Endothelial cell of umbilical vein (primary cell): ENCODE measurements at regions of chr10 and their contacts with region 1.

Region 1: GRCh38 chr10:119199231-119199992 is 8.0 kb upstream of the GRK5 start:
- DNase-seq: peak; percentile 82
- H3K4me3 ChIP-seq: no peak overlapping the region
- H3K27ac ChIP-seq: no peak overlapping the region
- H3K4me1 ChIP-seq: peaks cover 31% of the 10 kb centered on the region
- H3K27me3 ChIP-seq: no peaks in the 10 kb centered on the region
- CTCF ChIP-seq: peak; percentile 78 to 81
- POLR2A ChIP-seq: no peak

Region 2: GRCh38 chr10:119139464-119140067 is 59.8 kb before region 1 on chr10:
- CTCF ChIA-PET with region 1: interaction called, 8 read pairs
- POLR2A ChIA-PET with region 1: no interaction called
- dilution Hi-C with region 1: no loop called
- intact Hi-C with region 1: loop called (anchors 1 kb)
- DNase-seq: peak; percentile 37
- H3K4me3 ChIP-seq: no peak overlapping the region
- H3K27ac ChIP-seq: no peak overlapping the region
- H3K4me1 ChIP-seq: peaks cover 3% of the 10 kb centered on the region
- H3K27me3 ChIP-seq: no peaks in the 10 kb centered on the region
- CTCF ChIP-seq: peak; percentile 50 to 75
- POLR2A ChIP-seq: no peak

Region 3: GRCh38 chr10:119225083-119225658 is 25.8 kb after region 1 on chr10:
- CTCF ChIA-PET with region 1: no interaction called
- POLR2A ChIA-PET with region 1: no interaction called
- dilution Hi-C with region 1: no loop called
- intact Hi-C with region 1: no loop called
- DNase-seq: peak; percentile 58
- H3K4me3 ChIP-seq: no peak overlapping the region
- H3K27ac ChIP-seq: no peak overlapping the region
- H3K4me1 ChIP-seq: no peaks in the 10 kb centered on the region
- H3K27me3 ChIP-seq: no peaks in the 10 kb centered on the region
- CTCF ChIP-seq: no peak
- POLR2A ChIP-seq: no peak

Region 4: GRCh38 chr10:119246862-119247549 is 47.6 kb after region 1 on chr10:
- CTCF ChIA-PET with region 1: interaction called, 17 read pairs
- POLR2A ChIA-PET with region 1: no interaction called
- dilution Hi-C with region 1: no loop called
- intact Hi-C with region 1: no loop called
- DNase-seq: peak; percentile 90
- H3K4me3 ChIP-seq: no peak overlapping the region
- H3K27ac ChIP-seq: peak overlapping the region; percentile 54
- H3K4me1 ChIP-seq: peaks cover 40% of the 10 kb centered on the region
- H3K27me3 ChIP-seq: no peaks in the 10 kb centered on the region
- CTCF ChIP-seq: no peak
- POLR2A ChIP-seq: no peak

Region 5: DNA sequence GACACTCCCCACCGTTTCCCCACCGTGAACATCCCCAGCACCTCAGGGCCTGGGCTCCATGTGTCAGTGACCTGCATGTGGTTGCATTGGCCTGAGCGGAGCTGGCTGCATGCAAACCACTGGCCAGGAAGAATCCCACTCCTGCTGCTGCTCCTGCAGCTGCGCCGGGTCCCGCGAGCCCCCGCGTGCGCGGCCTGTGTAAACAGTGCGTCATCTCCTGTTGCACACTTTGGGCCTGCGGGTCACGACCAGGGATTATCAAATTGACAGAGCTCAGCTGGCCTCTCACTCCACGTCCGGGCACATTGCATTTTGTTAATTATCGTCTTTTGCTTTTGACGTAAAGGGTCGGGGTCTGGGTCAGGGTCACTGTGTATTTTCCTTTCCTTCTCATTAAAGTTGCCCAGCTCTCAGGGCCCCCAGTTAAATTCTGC is 210.5 kb after region 1 on chr10:
- CTCF ChIA-PET with region 1: interaction called, 17 read pairs
- POLR2A ChIA-PET with region 1: no interaction called
- dilution Hi-C with region 1: no loop called
- intact Hi-C with region 1: no loop called
- DNase-seq: peak; percentile 94
- H3K4me3 ChIP-seq: no peak overlapping the region
- H3K27ac ChIP-seq: peak overlapping the region; percentile 85
- H3K4me1 ChIP-seq: peaks cover 44% of the 10 kb centered on the region
- H3K27me3 ChIP-seq: no peaks in the 10 kb centered on the region
- CTCF ChIP-seq: no peak
- POLR2A ChIP-seq: peak; percentile 66

Region 6: DNA sequence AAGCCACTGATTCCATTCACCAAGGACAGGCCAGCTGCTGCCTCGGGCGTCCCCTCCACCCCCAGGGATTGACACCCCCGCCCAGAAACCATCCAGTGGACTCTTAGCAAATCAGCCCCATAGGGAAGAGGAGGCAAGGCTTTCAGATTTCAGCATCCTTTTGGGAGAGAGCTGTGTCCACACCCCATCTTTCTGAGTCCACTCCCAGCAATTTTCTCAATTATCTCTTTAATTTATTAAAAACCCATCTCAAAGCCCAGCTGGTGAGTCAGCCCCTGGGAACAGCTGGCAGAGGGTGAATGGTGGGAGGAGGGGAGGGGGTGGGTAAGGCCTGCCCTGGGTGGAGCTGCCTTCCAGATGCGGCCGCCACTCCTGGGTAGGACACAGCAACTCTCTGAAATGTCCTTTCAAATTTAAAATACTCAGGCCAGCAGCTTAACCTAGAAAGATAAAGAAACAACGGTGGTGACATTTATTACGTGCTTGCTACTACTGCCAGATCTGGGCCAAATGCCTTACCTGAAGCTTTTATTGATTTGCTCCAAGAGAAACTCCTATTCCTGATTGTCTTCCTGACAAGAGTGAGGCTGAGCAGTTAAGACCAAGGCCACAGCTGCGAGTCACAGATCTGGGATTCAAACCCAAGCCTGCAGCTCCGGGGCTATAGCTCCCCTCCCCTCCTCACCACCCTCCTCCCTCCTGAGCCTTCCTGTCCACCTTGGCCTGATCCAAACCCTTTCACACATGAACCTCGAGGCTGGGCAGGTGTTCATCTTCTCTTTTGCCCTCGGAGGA is 222.7 kb after region 1 on chr10:
- CTCF ChIA-PET with region 1: interaction called, 59 read pairs
- POLR2A ChIA-PET with region 1: no interaction called
- dilution Hi-C with region 1: no loop called
- intact Hi-C with region 1: loop called (anchors 1 kb)
- DNase-seq: no peak
- H3K4me3 ChIP-seq: no peak overlapping the region
- H3K27ac ChIP-seq: no peak overlapping the region
- H3K4me1 ChIP-seq: no peaks in the 10 kb centered on the region
- H3K27me3 ChIP-seq: no peaks in the 10 kb centered on the region
- CTCF ChIP-seq: no peak
- POLR2A ChIP-seq: no peak

Region 7: GRCh38 chr10:119494236-119495060 is 295.0 kb after region 1 on chr10:
- CTCF ChIA-PET with region 1: interaction called, 65 read pairs
- POLR2A ChIA-PET with region 1: no interaction called
- dilution Hi-C with region 1: no loop called
- intact Hi-C with region 1: loop called (anchors 1 kb)
- DNase-seq: no peak
- H3K4me3 ChIP-seq: no peak overlapping the region
- H3K27ac ChIP-seq: no peak overlapping the region
- H3K4me1 ChIP-seq: no peaks in the 10 kb centered on the region
- H3K27me3 ChIP-seq: no peaks in the 10 kb centered on the region
- CTCF ChIP-seq: no peak
- POLR2A ChIP-seq: no peak

Region 8: DNA sequence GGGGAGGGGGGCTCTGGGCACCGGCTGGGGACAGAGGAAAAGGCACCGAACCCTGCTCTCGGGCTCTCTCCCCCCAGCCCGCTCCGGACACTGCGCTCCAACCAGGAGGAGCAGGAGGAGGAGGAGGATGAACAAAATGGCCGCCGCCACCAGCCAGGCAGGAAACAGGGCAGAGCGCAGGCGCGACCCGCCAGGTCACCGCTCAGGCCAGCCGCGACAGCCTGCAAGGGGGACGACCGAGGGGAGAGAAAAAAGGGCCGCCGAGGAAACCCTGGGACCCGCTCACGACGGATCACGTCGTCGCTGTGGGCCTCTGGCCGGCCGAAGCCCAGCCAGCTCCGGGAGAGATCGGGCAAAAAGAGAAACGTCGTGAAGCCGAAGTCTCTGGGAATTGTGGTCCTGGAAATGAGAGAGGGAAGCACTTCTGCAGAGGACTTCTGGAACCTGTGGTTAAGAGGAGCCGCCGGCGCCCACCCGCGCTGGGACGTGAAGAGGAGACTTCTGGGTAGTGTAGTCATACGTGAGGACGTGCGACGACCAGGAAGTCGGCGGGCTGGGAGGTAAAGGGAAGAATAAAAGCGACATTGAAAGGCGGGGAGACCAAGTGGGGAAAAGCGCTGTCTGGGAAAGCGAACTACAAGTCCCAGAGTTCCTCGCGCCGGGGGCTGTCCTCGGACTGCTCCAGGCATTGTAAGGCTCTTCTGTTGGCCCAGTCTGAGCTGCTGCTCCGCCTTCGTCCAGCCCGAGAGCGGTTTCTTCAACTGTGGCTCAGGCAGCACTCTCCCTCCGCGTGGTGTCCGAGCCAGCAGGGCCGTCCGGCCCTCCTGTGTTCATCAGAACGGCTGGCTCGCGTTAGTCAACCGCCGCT is 397.4 kb after region 1 on chr10 and contains the start of gene TIAL1:
- CTCF ChIA-PET with region 1: interaction called, 31 read pairs
- POLR2A ChIA-PET with region 1: no interaction called
- dilution Hi-C with region 1: no loop called
- intact Hi-C with region 1: loop called (anchors 2 kb)
- DNase-seq: peak; percentile 100
- H3K4me3 ChIP-seq: peak within 1 kb of the TSS; percentile 85 to 97 (median 97)
- H3K27ac ChIP-seq: peak within 1 kb of the TSS; percentile 95
- H3K4me1 ChIP-seq: peaks cover 41% of the 10 kb centered on the region
- H3K27me3 ChIP-seq: no peaks in the 10 kb centered on the region
- CTCF ChIP-seq: no peak
- POLR2A ChIP-seq: peak; percentile 96
- total RNA-seq, gene TIAL1: 150 and 154 TPM in 2 replicates